ENCODE measurements at regions of chr6 and their contacts with region 1.

Region 1: DNA sequence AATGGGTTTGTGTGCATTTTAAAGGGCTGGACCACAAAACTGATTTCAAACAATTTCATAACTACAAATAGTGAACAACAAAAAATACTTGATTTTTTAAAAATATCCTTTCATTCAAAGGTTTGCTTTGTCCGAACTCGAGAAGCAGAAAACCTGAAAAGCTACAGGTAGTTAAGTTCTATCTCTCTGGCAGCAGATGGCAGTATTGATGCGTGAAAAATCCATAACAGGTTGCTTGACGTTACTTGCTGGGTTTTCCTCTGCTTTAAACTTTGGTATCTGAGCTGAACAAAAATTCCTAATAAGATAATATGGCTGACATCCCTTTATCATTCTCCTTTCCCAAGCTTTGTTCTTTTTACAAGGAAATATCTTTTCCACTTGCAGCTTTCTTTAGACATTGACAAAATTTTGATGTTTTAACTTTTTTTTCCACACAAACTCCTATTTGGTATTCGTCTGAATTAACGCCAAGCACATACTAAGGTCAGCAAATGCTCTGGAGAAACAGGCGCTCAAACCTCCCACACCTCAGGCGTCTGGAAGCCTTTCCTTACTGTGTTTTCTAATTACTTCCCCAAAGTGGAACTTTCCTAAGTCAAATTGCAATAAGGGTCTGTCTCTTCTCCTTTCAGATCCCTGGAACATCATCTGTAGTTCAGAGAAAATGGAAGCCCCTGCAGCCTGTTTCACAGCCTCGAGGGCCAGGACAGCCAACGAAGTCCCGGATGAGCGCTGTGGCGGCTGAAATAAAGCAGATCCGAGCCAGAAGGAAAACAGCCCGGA is 50.3 kb upstream of the GFRAL start:
- DNase-seq: no peak
- ATAC-seq: peak; percentile 64
- H3K4me3 ChIP-seq: no peak overlapping the region
- H3K27ac ChIP-seq: no peak overlapping the region
- H3K4me1 ChIP-seq: no peaks in the 10 kb centered on the region
- H3K27me3 ChIP-seq: no peaks in the 10 kb centered on the region
- CTCF ChIP-seq: peak; percentile 51 to 61 (median 56); a peak in 5 of 6 replicates
- EP300 ChIP-seq: no peak
- POLR2A ChIP-seq: no peak
- RAD21 ChIP-seq: peak; percentile 66

Region 2: DNA sequence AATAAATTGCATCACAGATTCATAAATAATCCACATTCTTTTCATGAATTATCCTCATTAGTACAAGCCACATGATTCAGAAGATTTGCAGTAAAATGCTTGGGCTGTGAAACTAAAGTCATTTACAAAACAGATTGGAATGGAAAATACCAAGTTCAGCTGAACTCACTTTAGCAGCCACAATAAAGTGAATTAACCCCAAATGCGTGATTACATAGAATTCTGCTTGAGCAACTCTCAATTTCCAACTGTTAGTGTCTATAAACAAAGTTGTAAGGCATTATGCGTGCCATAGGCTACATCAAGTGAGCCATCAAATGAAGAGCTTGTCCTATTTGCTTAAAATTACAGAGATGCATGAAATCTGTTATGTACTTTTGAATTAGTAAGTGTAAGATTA is 10.0 kb before region 1 on chr6:
- CTCF ChIA-PET with region 1: interaction called, 19 read pairs
- POLR2A ChIA-PET with region 1: no interaction called
- RAD21 ChIA-PET with region 1: no interaction called
- SMC1A ChIA-PET with region 1: interaction called, 3 read pairs
- in situ Hi-C with region 1: no loop called
- intact Hi-C with region 1: no loop called
- DNase-seq: no peak
- ATAC-seq: no peak
- H3K4me3 ChIP-seq: no peak overlapping the region
- H3K27ac ChIP-seq: no peak overlapping the region
- H3K4me1 ChIP-seq: no peaks in the 10 kb centered on the region
- H3K27me3 ChIP-seq: no peaks in the 10 kb centered on the region
- CTCF ChIP-seq: no peak
- EP300 ChIP-seq: no peak
- POLR2A ChIP-seq: no peak
- RAD21 ChIP-seq: no peak

Region 3: GRCh38 chr6:55536391-55536956 is 259.5 kb after region 1 on chr6:
- CTCF ChIA-PET with region 1: no interaction called
- POLR2A ChIA-PET with region 1: no interaction called
- RAD21 ChIA-PET with region 1: no interaction called
- SMC1A ChIA-PET with region 1: no interaction called
- in situ Hi-C with region 1: no loop called
- intact Hi-C with region 1: loop called (anchors 10 kb)
- DNase-seq: no peak
- ATAC-seq: no peak
- H3K4me3 ChIP-seq: no peak overlapping the region
- H3K27ac ChIP-seq: no peak overlapping the region
- H3K4me1 ChIP-seq: no peaks in the 10 kb centered on the region
- H3K27me3 ChIP-seq: no peaks in the 10 kb centered on the region
- CTCF ChIP-seq: no peak
- EP300 ChIP-seq: no peak
- POLR2A ChIP-seq: no peak
- RAD21 ChIP-seq: no peak

Region 4: GRCh38 chr6:55886185-55886836 is 609.4 kb after region 1 on chr6:
- CTCF ChIA-PET with region 1: interaction called, 8 read pairs
- POLR2A ChIA-PET with region 1: no interaction called
- RAD21 ChIA-PET with region 1: interaction called, 3 read pairs
- SMC1A ChIA-PET with region 1: interaction called, 4 read pairs
- in situ Hi-C with region 1: loop called (anchors 25 kb)
- intact Hi-C with region 1: loop called (anchors 5 kb)
- DNase-seq: no peak
- ATAC-seq: no peak
- H3K4me3 ChIP-seq: no peak overlapping the region
- H3K27ac ChIP-seq: no peak overlapping the region
- H3K4me1 ChIP-seq: no peaks in the 10 kb centered on the region
- H3K27me3 ChIP-seq: no peaks in the 10 kb centered on the region
- CTCF ChIP-seq: peak in 2 of 3 experiments; percentile 2 to 17; a peak in 2 of 6 replicates
- EP300 ChIP-seq: no peak
- POLR2A ChIP-seq: no peak
- RAD21 ChIP-seq: peak; percentile 60